Posterior vena cava (tissue), 2 donors: ENCODE measurements at regions of chr6 and their contacts with region 1.

Region 1: GRCh38 chr6:17865798-17866725 is 121.4 kb downstream of the KIF13A start:
- DNase-seq: peak; percentile 94

Region 2: DNA sequence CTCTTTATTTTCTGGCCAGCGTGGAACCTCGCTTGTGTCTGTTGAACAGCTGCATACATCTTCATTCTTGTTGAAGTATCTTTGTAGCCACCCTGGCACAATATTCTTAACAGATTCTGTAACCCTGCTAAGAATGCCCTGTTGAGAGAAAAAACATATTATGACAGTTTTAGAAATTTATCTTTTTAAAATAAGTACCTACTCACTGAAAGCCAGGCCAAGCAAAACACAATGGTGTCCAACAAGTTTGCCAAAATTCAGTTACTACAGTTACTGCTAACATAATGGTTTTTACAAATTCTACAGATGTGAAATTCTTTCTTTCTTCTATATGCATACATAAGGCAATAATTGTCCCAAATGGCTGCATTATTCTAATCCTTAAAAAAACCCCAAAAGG is 177.6 kb before region 1 on chr6:
- intact Hi-C with region 1: no loop called
- DNase-seq: no peak

Region 3: DNA sequence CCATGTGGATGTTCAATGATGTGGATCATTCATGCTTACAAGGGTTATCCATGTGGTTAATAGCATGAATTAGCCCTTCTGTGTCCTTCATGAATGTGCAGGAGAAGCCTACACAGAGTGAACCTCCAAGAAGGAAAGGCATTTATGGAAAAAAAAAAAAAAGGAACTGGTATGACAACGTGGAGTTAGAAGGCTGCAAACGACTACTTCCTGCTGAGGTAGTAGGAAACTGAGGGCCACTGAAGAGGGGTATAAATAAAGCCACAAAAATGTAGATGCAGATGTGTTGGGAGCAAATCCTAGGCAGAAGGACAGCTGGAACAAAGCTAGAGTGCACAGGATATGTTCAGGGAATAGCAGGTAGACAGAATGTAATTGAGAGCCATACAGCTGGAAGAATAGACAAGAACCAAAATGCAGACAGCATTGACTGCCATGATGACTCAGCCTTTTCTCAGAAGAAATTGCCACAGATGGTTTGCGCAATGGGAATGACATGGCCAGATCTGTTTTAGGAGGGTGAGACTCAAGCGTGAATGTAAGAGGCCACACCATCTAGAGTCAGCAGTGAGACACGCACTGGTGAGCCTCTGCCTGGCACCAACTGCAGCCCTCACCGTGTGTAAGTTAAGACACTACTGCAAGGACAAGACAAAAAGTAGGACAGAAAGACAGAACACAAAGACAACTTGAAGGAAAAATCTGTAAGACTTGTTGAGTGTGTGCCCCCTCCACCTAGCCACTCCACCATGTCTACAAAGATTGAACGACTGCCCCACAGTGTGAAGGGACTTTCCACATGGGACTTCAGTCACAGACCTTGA is 41.6 kb after region 1 on chr6:
- intact Hi-C with region 1: no loop called
- DNase-seq: peak; percentile 91

Region 4: GRCh38 chr6:17962436-17963031 is 96.5 kb after region 1 on chr6:
- intact Hi-C with region 1: loop called in 1 of 2 experiments (anchors 5 kb)
- DNase-seq: peak; percentile 88